ENCODE measurements at regions of chr11 and their contacts with region 1.

Region 1: DNA sequence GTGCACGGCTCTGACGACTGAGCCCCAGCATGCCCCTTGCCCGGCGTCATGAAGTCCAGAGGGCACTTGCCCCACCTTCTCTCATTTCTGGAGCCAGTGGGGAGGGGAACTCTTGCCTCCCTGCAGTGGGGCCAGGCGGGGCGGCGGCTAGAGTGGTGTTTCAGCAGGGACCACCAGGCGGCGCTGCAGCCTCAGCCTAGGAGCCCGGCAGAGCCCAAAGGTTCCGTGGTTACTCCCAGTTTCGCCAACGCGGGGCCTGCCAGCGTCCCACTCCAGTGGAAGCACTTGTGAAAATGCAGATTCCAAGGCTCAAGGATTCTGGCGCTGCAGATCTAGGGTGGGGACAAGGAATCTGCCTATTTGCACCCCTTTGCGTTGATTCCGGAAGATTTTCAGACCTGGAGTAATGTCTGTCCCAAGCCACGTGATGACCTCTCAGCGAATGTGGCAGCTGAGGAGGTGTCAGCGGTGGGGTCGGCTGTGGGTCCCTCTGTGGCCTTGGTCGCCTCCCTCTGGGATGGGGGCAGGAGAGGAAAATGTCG is 55.7 kb downstream of the CD82 start:
- DNase-seq: peak; percentile 70
- H3K4me3 Mint-ChIP-seq: no peak overlapping the region
- H3K27ac Mint-ChIP-seq: no peak overlapping the region
- H3K4me1 Mint-ChIP-seq: no peaks in the 10 kb centered on the region
- H3K27me3 Mint-ChIP-seq: no peaks in the 10 kb centered on the region
- CTCF ChIP-seq: peak; percentile 98

Region 2: GRCh38 chr11:44556735-44557409 is 64.3 kb before region 1 on chr11:
- CTCF ChIA-PET with region 1: interaction called, 64 read pairs
- POLR2A ChIA-PET with region 1: interaction called, 28 read pairs
- intact Hi-C with region 1: loop called (anchors 1 kb)
- DNase-seq: peak; percentile 72
- H3K4me3 Mint-ChIP-seq: no peak overlapping the region
- H3K27ac Mint-ChIP-seq: no peak overlapping the region
- H3K4me1 Mint-ChIP-seq: peaks cover 23% of the 10 kb centered on the region
- H3K27me3 Mint-ChIP-seq: no peaks in the 10 kb centered on the region
- CTCF ChIP-seq: peak; percentile 71

Region 3: GRCh38 chr11:44727373-44728287 is 106.4 kb after region 1 on chr11:
- CTCF ChIA-PET with region 1: interaction called, 3 read pairs
- POLR2A ChIA-PET with region 1: no interaction called
- intact Hi-C with region 1: loop called (anchors 5 kb)
- DNase-seq: peak; percentile 71
- H3K4me3 Mint-ChIP-seq: peak overlapping the region; percentile 60
- H3K27ac Mint-ChIP-seq: no peak overlapping the region
- H3K4me1 Mint-ChIP-seq: no peaks in the 10 kb centered on the region
- H3K27me3 Mint-ChIP-seq: peaks cover 33% of the 10 kb centered on the region
- CTCF ChIP-seq: peak; percentile 92

Region 4: GRCh38 chr11:44861849-44862749 is 240.9 kb after region 1 on chr11:
- CTCF ChIA-PET with region 1: no interaction called
- POLR2A ChIA-PET with region 1: no interaction called
- intact Hi-C with region 1: loop called (anchors 1 kb)
- DNase-seq: peak; percentile 98
- H3K4me3 Mint-ChIP-seq: no peak overlapping the region
- H3K27ac Mint-ChIP-seq: peak overlapping the region; percentile 44
- H3K4me1 Mint-ChIP-seq: peaks cover 30% of the 10 kb centered on the region
- H3K27me3 Mint-ChIP-seq: peaks cover 16% of the 10 kb centered on the region
- CTCF ChIP-seq: no peak

Region 5: GRCh38 chr11:44911029-44911814 is 290.0 kb after region 1 on chr11:
- CTCF ChIA-PET with region 1: interaction called, 17 read pairs
- POLR2A ChIA-PET with region 1: no interaction called
- intact Hi-C with region 1: loop called (anchors 1 kb)
- DNase-seq: peak; percentile 82
- H3K4me3 Mint-ChIP-seq: no peak overlapping the region
- H3K27ac Mint-ChIP-seq: no peak overlapping the region
- H3K4me1 Mint-ChIP-seq: no peaks in the 10 kb centered on the region
- H3K27me3 Mint-ChIP-seq: no peaks in the 10 kb centered on the region
- CTCF ChIP-seq: peak; percentile 79

Region 6: GRCh38 chr11:44989831-44990566 is 368.8 kb after region 1 on chr11:
- CTCF ChIA-PET with region 1: no interaction called
- POLR2A ChIA-PET with region 1: no interaction called
- intact Hi-C with region 1: no loop called
- DNase-seq: no peak
- H3K4me3 Mint-ChIP-seq: no peak overlapping the region
- H3K27ac Mint-ChIP-seq: no peak overlapping the region
- H3K4me1 Mint-ChIP-seq: no peaks in the 10 kb centered on the region
- H3K27me3 Mint-ChIP-seq: peaks cover 12% of the 10 kb centered on the region
- CTCF ChIP-seq: no peak